ENCODE measurements at regions of chr11 and their contacts with region 1.

Region 1: DNA sequence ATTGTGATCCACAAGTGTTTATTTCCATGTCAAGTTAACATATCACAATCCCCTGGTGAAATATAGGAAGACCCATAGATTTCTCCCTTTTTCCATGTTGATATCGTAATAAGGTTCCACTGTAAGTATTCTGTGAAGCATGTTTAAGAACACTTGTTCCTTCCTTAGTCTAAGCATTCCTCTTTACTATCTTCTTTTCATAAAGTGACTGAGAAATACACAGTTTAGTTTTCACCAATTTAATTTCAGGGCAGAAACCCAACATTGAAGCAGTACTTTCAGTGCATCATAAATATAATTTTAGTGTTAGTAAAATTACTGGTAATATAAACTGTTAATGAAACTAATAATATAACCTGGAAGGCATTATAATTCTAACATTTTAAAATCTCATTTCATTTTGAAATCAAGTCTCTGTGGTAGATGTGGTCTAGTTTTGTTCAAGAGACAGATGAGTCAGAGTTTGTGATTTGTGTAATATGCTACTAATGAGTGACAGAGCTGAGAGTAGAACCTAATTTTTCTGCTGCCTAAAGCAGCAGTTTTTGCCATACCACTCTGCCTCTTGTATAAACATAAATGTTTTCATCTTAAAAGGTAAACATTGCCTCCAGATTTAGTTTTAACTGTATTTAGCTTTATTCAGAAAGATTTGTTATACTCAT is 79.4 kb downstream of the ATM start:
- DNase-seq: no peak
- H3K4me3 ChIP-seq: no peak overlapping the region
- H3K27ac ChIP-seq: no peak overlapping the region
- H3K4me1 ChIP-seq: no peaks in the 10 kb centered on the region
- H3K27me3 ChIP-seq: no peaks in the 10 kb centered on the region
- CTCF ChIP-seq: no peak
- POLR2A ChIP-seq: no peak

Region 2: DNA sequence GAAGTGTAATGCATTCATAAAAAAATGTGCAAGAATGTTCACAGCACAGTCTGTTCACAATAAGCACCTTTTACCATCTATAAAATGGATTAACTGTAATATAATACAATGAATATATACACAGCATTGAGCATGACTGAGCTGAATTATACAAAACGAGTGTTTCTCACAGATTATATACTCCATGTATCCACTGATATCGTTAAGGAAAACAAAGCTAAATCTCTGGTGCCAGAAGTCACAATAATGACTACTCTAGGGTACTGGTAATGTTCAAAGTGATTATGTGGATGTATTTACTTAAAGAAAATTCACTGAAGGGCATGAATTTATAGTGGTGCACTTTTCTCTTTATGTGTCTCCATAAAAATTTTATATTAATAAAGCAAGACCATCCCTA is 147.7 kb before region 1 on chr11:
- CTCF ChIA-PET with region 1: no interaction called
- POLR2A ChIA-PET with region 1: no interaction called
- dilution Hi-C with region 1: no loop called
- intact Hi-C with region 1: no loop called
- DNase-seq: no peak
- H3K4me3 ChIP-seq: no peak overlapping the region
- H3K27ac ChIP-seq: no peak overlapping the region
- H3K4me1 ChIP-seq: no peaks in the 10 kb centered on the region
- H3K27me3 ChIP-seq: no peaks in the 10 kb centered on the region
- CTCF ChIP-seq: no peak
- POLR2A ChIP-seq: no peak

Region 3: GRCh38 chr11:108324587-108324986 is 22.3 kb after region 1 on chr11:
- CTCF ChIA-PET with region 1: no interaction called
- POLR2A ChIA-PET with region 1: no interaction called
- dilution Hi-C with region 1: no loop called
- intact Hi-C with region 1: loop called (anchors 1 kb)
- DNase-seq: no peak
- H3K4me3 ChIP-seq: no peak overlapping the region
- H3K27ac ChIP-seq: no peak overlapping the region
- H3K4me1 ChIP-seq: no peaks in the 10 kb centered on the region
- H3K27me3 ChIP-seq: no peaks in the 10 kb centered on the region
- CTCF ChIP-seq: no peak
- POLR2A ChIP-seq: no peak

Measured in endothelial cell of umbilical vein (primary cell).